Tibial artery (tissue), 4 donors: ENCODE measurements at regions of chr6 and their contacts with region 1.

Region 1: GRCh38 chr6:98808541-98809210 is 25.7 kb upstream of the POU3F2 start:
- DNase-seq: no peak
- H3K4me3 ChIP-seq: no peak overlapping the region
- H3K27ac ChIP-seq: no peak overlapping the region
- H3K4me1 ChIP-seq: no peaks in the 10 kb centered on the region
- H3K27me3 ChIP-seq: peaks cover 0 to 8% of the 10 kb centered on the region in 2 donors
- CTCF ChIP-seq: no peak

Region 2: GRCh38 chr6:98636941-98637340 is 171.7 kb before region 1 on chr6:
- intact Hi-C with region 1: no loop called
- DNase-seq: no peak
- H3K4me3 ChIP-seq: no peak overlapping the region
- H3K27ac ChIP-seq: no peak overlapping the region
- H3K4me1 ChIP-seq: no peaks in the 10 kb centered on the region
- H3K27me3 ChIP-seq: no peaks in the 10 kb centered on the region
- CTCF ChIP-seq: no peak

Region 3: DNA sequence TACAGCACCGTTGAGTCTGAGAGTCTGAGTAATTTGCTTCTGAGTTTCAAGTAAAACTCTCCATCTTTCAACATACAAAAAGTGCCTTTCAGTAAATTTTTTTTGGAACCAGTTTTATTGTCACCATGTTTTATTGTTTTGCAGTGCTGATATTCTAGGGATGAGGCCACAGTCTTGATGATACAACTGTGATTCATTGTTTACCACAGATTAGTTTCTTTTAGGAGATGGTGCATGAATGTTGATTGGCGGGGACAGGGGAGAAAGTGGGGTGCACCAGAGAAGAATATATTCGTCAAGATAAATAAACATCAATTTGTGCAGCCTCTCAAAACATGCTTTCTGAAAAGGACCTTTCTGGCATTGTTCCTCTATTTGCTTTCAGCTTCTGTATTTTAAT is 1076.4 kb after region 1 on chr6:
- intact Hi-C with region 1: loop called (anchors 5 kb)
- DNase-seq: no peak
- H3K4me3 ChIP-seq: no peak overlapping the region
- H3K27ac ChIP-seq: no peak overlapping the region
- H3K4me1 ChIP-seq: no peaks in the 10 kb centered on the region
- H3K27me3 ChIP-seq: no peaks in the 10 kb centered on the region
- CTCF ChIP-seq: no peak